Adrenal gland (tissue), 19 donors: ENCODE measurements at regions of chr1 and their contacts with region 1.

Region 1: GRCh38 chr1:153220606-153221303 is 3.4 kb downstream of the PRR9 start:
- DNase-seq: no peak
- H3K4me3 ChIP-seq: no peak overlapping the region
- H3K27ac ChIP-seq: no peak overlapping the region
- H3K4me1 ChIP-seq: no peaks in the 10 kb centered on the region
- H3K27me3 ChIP-seq: no peaks in the 10 kb centered on the region
- CTCF ChIP-seq: no peak
- POLR2A ChIP-seq: no peak

Region 2: DNA sequence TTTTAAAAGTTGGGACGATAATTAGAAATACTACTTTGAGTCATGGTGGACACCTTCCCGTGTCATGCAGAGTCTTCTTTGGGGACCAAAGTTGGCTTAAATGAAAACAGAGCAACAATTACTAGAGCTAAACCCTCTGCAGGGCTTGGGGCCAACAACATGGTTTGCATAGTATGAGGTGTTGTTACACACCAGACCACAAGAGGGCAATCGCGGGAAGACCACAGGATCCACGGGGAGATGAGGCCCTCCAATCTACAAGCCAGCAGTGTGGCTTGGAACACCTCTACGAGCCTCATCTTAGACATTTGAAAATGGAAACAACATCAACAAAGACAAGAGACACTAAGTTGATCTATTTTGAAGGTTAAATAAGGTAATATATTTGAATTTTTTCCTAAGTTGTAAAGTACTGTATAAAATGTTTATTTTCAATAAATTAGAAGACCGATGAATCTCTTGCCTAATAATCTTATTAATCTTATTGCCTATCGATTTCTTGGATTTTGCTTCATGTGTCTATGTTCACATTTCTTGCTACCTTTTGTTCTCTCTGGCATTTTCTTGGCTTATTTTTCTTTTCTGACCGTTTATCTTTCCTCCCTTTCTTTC is 350.8 kb before region 1 on chr1:
- intact Hi-C with region 1: loop called (anchors 2 to 10 kb)
- DNase-seq: peak; percentile 56 to 83 (median 72)
- H3K4me3 ChIP-seq: no peak overlapping the region
- H3K27ac ChIP-seq: no peak overlapping the region
- H3K4me1 ChIP-seq: no peaks in the 10 kb centered on the region
- H3K27me3 ChIP-seq: no peaks in the 10 kb centered on the region
- CTCF ChIP-seq: peak; percentile 47 to 68 (median 66)
- POLR2A ChIP-seq: no peak

Region 3: GRCh38 chr1:152917794-152918193 is 303.0 kb before region 1 on chr1:
- intact Hi-C with region 1: loop called in 1 of 2 experiments (anchors 5 kb)
- DNase-seq: peak in 5 of 7 donors; percentile 16 to 34 (median 24)
- H3K4me3 ChIP-seq: no peak overlapping the region
- H3K27ac ChIP-seq: no peak overlapping the region
- H3K4me1 ChIP-seq: no peaks in the 10 kb centered on the region
- H3K27me3 ChIP-seq: no peaks in the 10 kb centered on the region
- CTCF ChIP-seq: peak in 4 of 6 experiments; percentile 36 to 52 (median 41)
- POLR2A ChIP-seq: no peak

Region 4: DNA sequence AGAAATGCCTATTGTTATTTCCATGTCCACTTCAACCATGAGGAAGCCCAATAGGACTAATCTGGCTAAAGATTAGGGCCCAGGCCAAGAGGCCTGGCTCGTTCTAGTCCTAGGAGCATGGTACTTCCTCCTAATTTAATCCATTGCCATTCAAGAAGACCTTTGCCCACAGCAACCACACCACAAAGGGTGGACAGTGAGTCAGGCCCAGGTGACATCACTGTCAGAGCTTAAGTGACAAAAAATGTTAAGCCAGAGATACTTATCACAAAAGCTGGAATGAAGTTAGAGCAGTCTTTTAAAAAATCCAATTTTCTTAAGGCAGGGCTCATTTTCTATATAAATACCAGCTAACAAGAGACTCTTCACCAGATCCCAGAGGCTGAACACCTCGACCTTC is 219.4 kb before region 1 on chr1 and contains the start of gene SPRR3:
- intact Hi-C with region 1: no loop called
- DNase-seq: no peak
- H3K4me3 ChIP-seq: no peak within 1 kb of the TSS
- H3K27ac ChIP-seq: no peak within 1 kb of the TSS
- H3K4me1 ChIP-seq: no peaks in the 10 kb centered on the region
- H3K27me3 ChIP-seq: no peaks in the 10 kb centered on the region
- CTCF ChIP-seq: no peak
- POLR2A ChIP-seq: no peak
- total RNA-seq, gene SPRR3: 0.67 TPM in 1 of 9 donors, not detected in the others

Region 5: DNA sequence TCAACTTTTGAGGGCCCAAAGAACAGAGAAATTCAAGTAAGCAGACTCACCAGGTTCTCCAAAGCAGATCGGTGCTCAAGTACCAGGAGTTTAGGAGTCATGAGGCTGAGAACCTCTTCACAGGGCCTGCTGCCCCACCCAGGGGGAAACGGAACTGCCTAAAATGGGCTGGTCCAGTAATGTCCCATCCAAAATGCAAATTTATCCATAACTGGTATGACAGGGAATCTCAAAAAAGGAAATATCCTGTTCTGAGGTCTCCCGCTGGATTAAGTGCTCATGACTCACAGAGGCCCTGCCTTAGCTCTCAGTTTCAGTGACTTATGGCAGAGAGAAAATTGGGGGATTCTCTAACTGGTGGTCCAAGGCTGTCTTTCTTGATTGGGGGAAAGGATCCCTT is 79.4 kb before region 1 on chr1:
- intact Hi-C with region 1: no loop called
- DNase-seq: no peak
- H3K4me3 ChIP-seq: no peak overlapping the region
- H3K27ac ChIP-seq: no peak overlapping the region
- H3K4me1 ChIP-seq: no peaks in the 10 kb centered on the region
- H3K27me3 ChIP-seq: no peaks in the 10 kb centered on the region
- CTCF ChIP-seq: no peak
- POLR2A ChIP-seq: no peak

Region 6: GRCh38 chr1:153277817-153278216 is 57.1 kb after region 1 on chr1:
- intact Hi-C with region 1: no loop called
- DNase-seq: no peak
- H3K4me3 ChIP-seq: no peak overlapping the region
- H3K27ac ChIP-seq: no peak overlapping the region
- H3K4me1 ChIP-seq: no peaks in the 10 kb centered on the region
- H3K27me3 ChIP-seq: no peaks in the 10 kb centered on the region
- CTCF ChIP-seq: peak in 5 of 6 experiments; percentile 18 to 39 (median 28)
- POLR2A ChIP-seq: no peak